Activated T-helper 1 cell treated with anti-CD3 and anti-CD28 coated beads, Interleukin-12 subunit alpha, Interleukin-12 subunit beta, Interleukin-2, Interleukin-4 antibody, amounts not matched to agents 30 ng/mL and 10 ng/mL and 1 ng/mL, durations not matched to agents 14 hours and 24 hours and 36 hours (primary cell): ENCODE measurements at regions of chr7 and their contacts with region 1.

Region 1: GRCh38 chr7:114865564-114865963 is 56.3 kb upstream of the MDFIC start:
- DNase-seq: peak; percentile 31
- H3K4me3 Mint-ChIP-seq: no peak overlapping the region
- H3K27ac Mint-ChIP-seq: no peak overlapping the region
- H3K4me1 Mint-ChIP-seq: peaks cover 23% of the 10 kb centered on the region
- H3K27me3 Mint-ChIP-seq: peaks cover 2% of the 10 kb centered on the region

Region 2: DNA sequence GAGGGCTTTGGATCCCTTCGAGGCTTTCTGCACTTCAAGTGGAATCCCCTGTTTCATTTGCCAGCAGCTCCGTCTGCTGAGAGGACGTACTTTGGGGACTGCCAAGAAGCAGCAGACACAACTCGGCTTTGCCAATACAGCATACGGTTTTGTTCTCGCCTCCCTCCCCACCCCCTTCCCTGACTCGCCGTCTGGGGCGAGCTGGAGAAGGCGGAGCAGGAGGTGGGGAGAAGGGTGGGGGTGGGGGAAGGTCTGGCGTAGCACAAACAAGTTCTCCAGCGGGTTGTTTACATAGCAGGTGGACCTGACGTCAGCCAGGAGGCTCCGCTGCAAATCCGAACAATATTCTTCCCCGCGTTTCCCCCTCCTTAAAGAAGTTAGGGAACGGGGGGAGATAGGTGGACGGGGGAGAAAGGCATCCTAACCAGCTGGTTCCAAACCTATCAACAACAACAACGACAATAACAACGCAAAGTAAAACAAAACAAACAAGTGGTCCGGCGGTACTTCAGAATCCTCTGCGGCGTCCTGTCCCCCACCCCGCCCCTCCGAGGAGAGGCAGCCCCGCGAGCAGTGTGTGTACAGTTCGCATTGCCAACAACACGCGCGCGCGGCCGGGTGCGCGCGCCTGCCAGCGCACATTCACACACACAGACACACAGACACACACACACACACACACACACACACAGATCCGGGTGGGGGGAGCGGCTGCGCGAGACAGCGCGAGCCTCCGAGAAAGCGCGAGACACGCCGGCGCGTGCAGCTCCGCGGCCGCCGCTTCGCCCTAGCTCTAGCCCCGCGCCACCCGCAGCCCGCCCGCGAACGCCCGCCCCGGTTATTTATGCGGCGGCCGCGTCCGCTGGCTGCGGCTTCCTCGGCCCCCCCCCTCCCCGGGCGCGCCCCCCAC is 779.7 kb before region 1 on chr7:
- intact Hi-C with region 1: loop called (anchors 10 kb)
- DNase-seq: no peak
- H3K4me3 Mint-ChIP-seq: peak overlapping the region; percentile 83
- H3K27ac Mint-ChIP-seq: peak overlapping the region; percentile 81
- H3K4me1 Mint-ChIP-seq: peaks cover 39% of the 10 kb centered on the region
- H3K27me3 Mint-ChIP-seq: peaks cover 75% of the 10 kb centered on the region

Region 3: GRCh38 chr7:114663502-114663901 is 202.1 kb before region 1 on chr7:
- intact Hi-C with region 1: no loop called
- DNase-seq: no peak
- H3K4me3 Mint-ChIP-seq: no peak overlapping the region
- H3K27ac Mint-ChIP-seq: no peak overlapping the region
- H3K4me1 Mint-ChIP-seq: no peaks in the 10 kb centered on the region
- H3K27me3 Mint-ChIP-seq: peaks cover 1% of the 10 kb centered on the region

Region 4: GRCh38 chr7:114930829-114931655 is 65.5 kb after region 1 on chr7:
- intact Hi-C with region 1: loop called (anchors 2 kb)
- DNase-seq: no peak
- H3K4me3 Mint-ChIP-seq: peak overlapping the region; percentile 75
- H3K27ac Mint-ChIP-seq: no peak overlapping the region
- H3K4me1 Mint-ChIP-seq: peaks cover 36% of the 10 kb centered on the region
- H3K27me3 Mint-ChIP-seq: no peaks in the 10 kb centered on the region

Region 5: DNA sequence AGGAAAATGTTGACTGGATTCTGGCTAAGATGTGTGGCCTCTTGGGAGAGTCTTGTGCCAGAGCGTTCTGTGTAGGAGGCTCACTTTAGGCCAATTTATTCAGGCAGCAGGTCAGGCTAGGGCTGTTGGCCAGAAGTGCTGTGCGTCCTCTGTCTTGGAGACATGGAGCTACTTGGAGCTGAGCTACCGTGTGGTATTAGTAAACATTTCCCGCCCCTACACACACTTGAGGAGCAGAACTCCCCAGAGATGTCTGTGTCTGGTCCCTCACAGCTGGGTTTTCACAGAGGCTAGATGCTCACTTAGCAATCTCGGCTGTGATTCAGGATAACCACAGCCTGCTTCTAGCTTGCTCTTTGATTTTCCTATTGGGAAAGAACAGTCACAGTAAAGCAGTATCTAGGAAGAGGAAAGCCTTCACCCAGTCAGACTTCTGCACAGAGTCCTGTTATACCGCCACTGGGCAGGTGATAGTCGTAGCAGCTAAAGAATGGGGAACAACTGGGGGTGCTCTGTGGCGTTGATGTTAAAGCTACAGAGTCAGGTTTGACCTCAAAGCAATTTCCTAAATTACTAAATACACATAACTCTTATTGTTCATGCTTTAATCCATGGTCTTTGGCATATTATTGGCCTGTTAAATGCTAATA is 143.0 kb after region 1 on chr7:
- intact Hi-C with region 1: loop called (anchors 5 kb)
- DNase-seq: no peak
- H3K4me3 Mint-ChIP-seq: peak overlapping the region; percentile 77
- H3K27ac Mint-ChIP-seq: peak overlapping the region; percentile 76
- H3K4me1 Mint-ChIP-seq: peaks cover 84% of the 10 kb centered on the region
- H3K27me3 Mint-ChIP-seq: no peaks in the 10 kb centered on the region

Region 6: GRCh38 chr7:115379321-115379720 is 513.8 kb after region 1 on chr7:
- intact Hi-C with region 1: loop called (anchors 10 kb)
- DNase-seq: no peak
- H3K4me3 Mint-ChIP-seq: no peak overlapping the region
- H3K27ac Mint-ChIP-seq: no peak overlapping the region
- H3K4me1 Mint-ChIP-seq: no peaks in the 10 kb centered on the region
- H3K27me3 Mint-ChIP-seq: peaks cover 4% of the 10 kb centered on the region

Region 7: DNA sequence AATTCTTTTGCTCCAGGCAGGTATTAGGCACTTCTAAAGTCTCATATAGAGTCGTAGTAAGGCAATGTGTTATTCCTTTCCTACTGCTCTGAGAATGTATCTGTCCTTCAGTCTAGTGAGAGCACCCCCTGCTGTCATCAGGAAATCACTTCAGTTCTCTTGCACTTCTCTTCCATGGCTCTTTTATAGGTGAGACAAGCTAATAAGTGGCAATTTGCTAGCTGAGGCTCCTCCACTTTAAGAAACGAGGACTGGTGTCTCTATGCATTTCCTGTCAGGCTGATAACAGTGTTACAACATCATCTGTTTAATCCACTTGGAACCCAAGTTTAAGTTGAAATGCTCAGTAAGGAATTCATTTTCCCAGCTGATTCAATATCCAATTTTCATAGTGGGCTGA is 814.4 kb after region 1 on chr7:
- intact Hi-C with region 1: loop called (anchors 1 kb)
- DNase-seq: no peak
- H3K4me3 Mint-ChIP-seq: no peak overlapping the region
- H3K27ac Mint-ChIP-seq: no peak overlapping the region
- H3K4me1 Mint-ChIP-seq: no peaks in the 10 kb centered on the region
- H3K27me3 Mint-ChIP-seq: no peaks in the 10 kb centered on the region